ENCODE measurements at regions of chr1 and their contacts with region 1.

Region 1: DNA sequence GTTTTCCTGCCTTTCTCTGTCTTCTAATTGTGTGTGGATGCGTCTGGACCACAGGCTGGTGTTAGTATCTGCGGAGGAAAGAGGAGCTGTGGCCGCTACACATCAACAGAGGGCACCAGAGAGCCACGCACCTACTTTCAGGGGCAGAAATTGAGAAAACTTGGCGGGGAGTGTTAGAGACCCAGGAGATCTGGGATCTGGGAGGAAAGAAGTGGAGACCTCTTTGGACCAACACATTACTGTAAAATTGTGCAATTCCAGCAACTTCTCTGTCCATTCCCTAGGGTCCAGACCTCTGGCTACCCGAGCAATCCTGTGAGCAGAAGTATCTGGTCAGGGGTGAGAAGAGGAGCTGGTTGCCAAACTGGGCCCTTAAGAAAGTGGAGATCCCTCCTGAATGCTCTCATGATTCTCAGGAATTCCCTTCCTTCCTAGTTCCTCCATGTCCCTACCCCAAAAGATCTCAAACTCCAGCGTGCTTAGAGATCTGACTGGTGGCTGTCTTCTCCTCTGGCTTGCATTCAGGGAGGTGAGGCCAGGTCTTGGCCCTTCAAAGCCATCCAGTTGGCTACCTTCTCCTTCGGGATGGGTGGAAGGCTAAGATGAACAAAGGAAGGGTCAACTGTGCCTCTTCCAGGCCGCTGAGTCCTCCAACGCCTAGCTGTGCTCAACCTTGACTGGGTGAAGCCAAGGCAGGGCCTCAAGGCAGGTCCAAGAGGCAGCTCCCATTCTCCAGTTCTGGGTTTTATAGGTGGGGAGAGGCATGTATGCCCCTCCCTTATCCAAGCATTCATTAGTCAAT is 1.2 kb upstream of the KIRREL1 start:
- DNase-seq: peak; percentile 64 to 71 (median 68)
- ATAC-seq: peak; percentile 73
- H3K4me3 ChIP-seq: no peak overlapping the region
- H3K27ac ChIP-seq: peak overlapping the region in 2 of 4 donors; percentile 6 to 64
- H3K4me1 ChIP-seq: peaks cover 14% of the 10 kb centered on the region
- H3K27me3 ChIP-seq: peaks cover 0 to 4% of the 10 kb centered on the region in 2 donors
- CTCF ChIP-seq: peak; percentile 83 to 91 (median 88)
- POLR2A ChIP-seq: no peak

Region 2: GRCh38 chr1:157844089-157844830 is 148.0 kb before region 1 on chr1:
- intact Hi-C with region 1: no loop called
- DNase-seq: peak in 2 of 4 donors; percentile 6 to 9
- ATAC-seq: no peak
- H3K4me3 ChIP-seq: no peak overlapping the region
- H3K27ac ChIP-seq: no peak overlapping the region
- H3K4me1 ChIP-seq: no peaks in the 10 kb centered on the region
- H3K27me3 ChIP-seq: no peaks in the 10 kb centered on the region
- CTCF ChIP-seq: no peak
- POLR2A ChIP-seq: no peak

Region 3: DNA sequence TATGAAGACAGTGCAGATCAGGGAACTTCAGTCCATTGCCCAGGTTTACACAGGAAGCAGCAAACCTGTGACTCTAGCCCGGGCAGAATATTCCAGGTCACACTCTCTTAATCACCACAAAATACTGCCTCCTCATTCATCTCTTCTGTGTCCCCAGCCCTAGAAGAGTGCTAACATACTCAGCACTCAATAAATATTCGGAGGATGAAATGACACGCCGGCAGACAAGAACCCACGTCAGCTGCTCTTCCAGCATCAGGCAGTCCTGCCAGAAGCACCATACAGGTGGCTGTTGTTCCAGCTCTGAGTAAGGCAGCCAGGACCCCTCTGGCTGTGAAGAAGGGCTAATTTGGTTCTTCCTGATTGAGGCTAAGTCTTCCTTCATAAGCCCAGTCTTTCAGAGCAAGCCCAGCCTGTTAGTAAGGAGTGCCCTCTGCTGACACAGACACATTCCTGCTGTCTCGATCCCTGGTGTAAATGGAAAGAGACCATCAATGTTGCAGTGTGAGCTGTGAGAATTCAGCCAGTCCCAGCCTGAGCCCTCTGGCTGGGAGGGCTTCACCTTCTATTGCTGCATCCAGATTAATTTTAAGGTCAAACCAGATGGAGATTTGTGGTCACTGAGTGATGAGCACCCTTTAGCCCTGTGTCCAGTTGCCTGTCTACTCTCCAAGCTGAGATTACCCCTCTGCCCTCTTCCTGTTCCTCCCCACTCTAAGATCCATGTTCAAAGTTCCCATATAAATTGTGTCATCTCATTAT is 43.7 kb before region 1 on chr1:
- intact Hi-C with region 1: no loop called
- DNase-seq: peak in 1 of 4 donors; percentile 14
- ATAC-seq: peak; percentile 33
- H3K4me3 ChIP-seq: no peak overlapping the region
- H3K27ac ChIP-seq: no peak overlapping the region
- H3K4me1 ChIP-seq: peaks cover 13% of the 10 kb centered on the region
- H3K27me3 ChIP-seq: no peaks in the 10 kb centered on the region
- CTCF ChIP-seq: peak in 4 of 7 experiments; percentile 26 to 38 (median 31)
- POLR2A ChIP-seq: no peak

Region 4: DNA sequence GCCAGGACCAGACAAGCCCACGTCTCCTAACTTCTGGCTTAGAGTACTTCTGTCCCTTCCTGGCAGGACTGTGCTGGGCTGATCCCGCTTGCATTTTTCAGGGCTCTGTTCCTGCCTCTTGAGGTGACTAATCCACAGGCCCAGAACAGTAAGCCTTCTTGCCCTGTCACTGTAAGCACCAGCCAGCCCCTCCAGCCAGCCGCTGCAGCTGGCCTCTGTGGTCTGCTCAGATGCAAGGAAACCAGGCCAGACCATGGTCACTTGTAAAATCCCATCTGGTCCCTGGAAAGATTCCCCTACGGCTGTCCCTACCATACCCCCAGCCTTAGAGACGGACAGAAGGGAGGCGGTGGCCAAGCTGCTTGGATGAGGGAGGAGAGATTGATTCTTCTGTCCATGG is 75.4 kb after region 1 on chr1:
- intact Hi-C with region 1: loop called (anchors 10 kb)
- DNase-seq: peak in 1 of 4 donors; percentile 5
- ATAC-seq: no peak
- H3K4me3 ChIP-seq: no peak overlapping the region
- H3K27ac ChIP-seq: no peak overlapping the region
- H3K4me1 ChIP-seq: no peaks in the 10 kb centered on the region
- H3K27me3 ChIP-seq: no peaks in the 10 kb centered on the region
- CTCF ChIP-seq: no peak
- POLR2A ChIP-seq: no peak

Measured in body of pancreas (tissue), 4 donors.